ENCODE measurements at regions of chr11 and their contacts with region 1.

Region 1: GRCh38 chr11:62591448-62592145 is at the start of gene TUT1:
- DNase-seq: peak; percentile 99
- ATAC-seq: peak; percentile 89
- H3K4me3 ChIP-seq: peak within 1 kb of the TSS; percentile 85 to 97 (median 93)
- H3K4me3 Mint-ChIP-seq: peak within 1 kb of the TSS; percentile 91
- H3K27ac ChIP-seq: peak within 1 kb of the TSS; percentile 90
- H3K27ac Mint-ChIP-seq: peak within 1 kb of the TSS; percentile 96
- H3K4me1 ChIP-seq: peaks cover 23 to 34% of the 10 kb centered on the region in 2 donors
- H3K4me1 Mint-ChIP-seq: peaks cover 43% of the 10 kb centered on the region
- H3K27me3 ChIP-seq: no peaks in the 10 kb centered on the region
- H3K27me3 Mint-ChIP-seq: no peaks in the 10 kb centered on the region
- CTCF ChIP-seq: no peak
- total RNA-seq, gene TUT1: 33.8 and 47.7 TPM in 2 replicates

Region 2: DNA sequence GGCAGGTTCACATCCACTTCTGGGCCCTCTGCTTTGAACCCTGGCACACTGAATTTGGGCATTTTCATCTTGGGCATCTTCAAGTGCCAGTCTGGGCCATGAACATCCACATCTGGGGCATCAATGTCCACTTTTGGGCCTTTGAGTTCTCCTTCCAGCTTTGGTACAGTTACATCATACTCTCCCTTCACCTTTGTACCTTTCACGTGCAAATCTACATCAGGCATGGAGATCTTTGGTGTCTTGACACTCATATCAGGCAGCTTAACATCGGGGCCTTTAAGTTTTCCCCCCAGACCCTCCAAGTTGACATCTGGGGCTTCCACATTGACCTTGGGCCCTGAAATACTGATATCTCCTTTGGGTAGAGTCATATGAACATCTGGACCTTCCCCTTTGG is 59.5 kb before region 1 on chr11:
- CTCF ChIA-PET with region 1: no interaction called
- POLR2A ChIA-PET with region 1: no interaction called
- intact Hi-C with region 1: no loop called
- DNase-seq: no peak
- ATAC-seq: no peak
- H3K4me3 ChIP-seq: no peak overlapping the region
- H3K4me3 Mint-ChIP-seq: no peak overlapping the region
- H3K27ac ChIP-seq: no peak overlapping the region
- H3K27ac Mint-ChIP-seq: no peak overlapping the region
- H3K4me1 ChIP-seq: no peaks in the 10 kb centered on the region
- H3K4me1 Mint-ChIP-seq: peaks cover 9% of the 10 kb centered on the region
- H3K27me3 ChIP-seq: no peaks in the 10 kb centered on the region
- H3K27me3 Mint-ChIP-seq: no peaks in the 10 kb centered on the region
- CTCF ChIP-seq: no peak

Region 3: DNA sequence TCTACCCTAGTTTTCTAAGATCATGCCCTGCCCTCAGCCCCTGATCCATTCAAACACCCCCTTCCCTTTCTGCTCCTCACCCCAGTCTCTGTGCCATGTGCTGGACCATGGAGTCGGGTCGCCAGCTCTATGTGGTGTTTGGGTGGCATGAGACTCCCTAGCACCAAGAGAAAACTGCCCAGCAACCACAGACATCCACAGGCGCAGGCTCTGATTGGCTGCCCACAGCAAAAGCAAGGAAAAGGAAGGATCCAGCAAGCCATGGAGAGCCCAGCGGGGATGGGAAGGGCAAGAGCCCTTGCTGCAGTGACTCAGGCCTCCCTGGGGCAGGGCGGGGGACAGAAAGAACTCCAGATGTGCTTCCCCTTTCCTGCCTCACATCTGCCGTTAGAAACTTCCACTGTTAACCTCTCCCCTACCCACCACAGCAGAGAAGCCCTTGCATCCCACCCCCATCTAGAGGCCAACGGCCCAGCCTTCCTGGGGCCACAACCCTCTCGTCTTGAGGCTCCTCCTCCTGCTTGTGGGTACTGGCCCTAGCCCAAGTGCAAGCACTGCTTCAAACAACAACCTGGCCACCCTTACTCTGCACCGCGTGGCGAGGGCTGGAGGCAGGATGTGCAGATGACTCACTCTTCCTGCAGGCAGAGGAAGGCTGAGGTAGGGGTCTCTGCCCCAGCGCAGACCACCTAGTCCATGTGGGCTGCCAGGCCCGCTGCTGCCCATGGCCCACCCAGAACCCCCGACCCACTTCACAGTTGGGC is 35.3 kb before region 1 on chr11:
- CTCF ChIA-PET with region 1: interaction called, 12 read pairs
- POLR2A ChIA-PET with region 1: interaction called, 14 read pairs
- intact Hi-C with region 1: no loop called
- DNase-seq: peak; percentile 75
- ATAC-seq: peak; percentile 37
- H3K4me3 ChIP-seq: peak overlapping the region in 4 of 5 experiments; percentile 0 to 53 (median 26)
- H3K4me3 Mint-ChIP-seq: peak overlapping the region; percentile 80
- H3K27ac ChIP-seq: peak overlapping the region; percentile 98 to 99
- H3K27ac Mint-ChIP-seq: peak overlapping the region; percentile 96
- H3K4me1 ChIP-seq: peaks cover 65 to 84% of the 10 kb centered on the region in 2 donors
- H3K4me1 Mint-ChIP-seq: peaks cover 74% of the 10 kb centered on the region
- H3K27me3 ChIP-seq: no peaks in the 10 kb centered on the region
- H3K27me3 Mint-ChIP-seq: no peaks in the 10 kb centered on the region
- CTCF ChIP-seq: no peak

Region 4: GRCh38 chr11:62645956-62646824 is 54.6 kb after region 1 on chr11 and contains the start of gene GANAB:
- CTCF ChIA-PET with region 1: interaction called, 4 read pairs
- POLR2A ChIA-PET with region 1: interaction called, 7 read pairs
- intact Hi-C with region 1: loop called (anchors 1 kb)
- DNase-seq: peak; percentile 97
- ATAC-seq: peak; percentile 99
- H3K4me3 ChIP-seq: peak within 1 kb of the TSS; percentile 54 to 98 (median 90)
- H3K4me3 Mint-ChIP-seq: peak within 1 kb of the TSS; percentile 97
- H3K27ac ChIP-seq: peak within 1 kb of the TSS; percentile 75 to 89
- H3K27ac Mint-ChIP-seq: peak within 1 kb of the TSS; percentile 95
- H3K4me1 ChIP-seq: peaks cover 14 to 21% of the 10 kb centered on the region in 2 donors
- H3K4me1 Mint-ChIP-seq: peaks cover 26% of the 10 kb centered on the region
- H3K27me3 ChIP-seq: no peaks in the 10 kb centered on the region
- H3K27me3 Mint-ChIP-seq: no peaks in the 10 kb centered on the region
- CTCF ChIP-seq: no peak
- total RNA-seq, gene GANAB: 190 and 204 TPM in 2 replicates

Region 5: GRCh38 chr11:62694455-62695167 is 103.0 kb after region 1 on chr11:
- CTCF ChIA-PET with region 1: interaction called, 41 read pairs
- POLR2A ChIA-PET with region 1: interaction called, 4 read pairs
- intact Hi-C with region 1: no loop called
- DNase-seq: peak; percentile 85
- ATAC-seq: peak; percentile 71
- H3K4me3 ChIP-seq: no peak overlapping the region
- H3K4me3 Mint-ChIP-seq: no peak overlapping the region
- H3K27ac ChIP-seq: no peak overlapping the region
- H3K27ac Mint-ChIP-seq: no peak overlapping the region
- H3K4me1 ChIP-seq: peaks cover 0 to 6% of the 10 kb centered on the region in 2 donors
- H3K4me1 Mint-ChIP-seq: peaks cover 5% of the 10 kb centered on the region
- H3K27me3 ChIP-seq: no peaks in the 10 kb centered on the region
- H3K27me3 Mint-ChIP-seq: no peaks in the 10 kb centered on the region
- CTCF ChIP-seq: peak; percentile 87

Region 6: GRCh38 chr11:62771144-62772021 is 179.8 kb after region 1 on chr11 and contains the start of gene TAF6L:
- CTCF ChIA-PET with region 1: interaction called, 3 read pairs
- POLR2A ChIA-PET with region 1: no interaction called
- intact Hi-C with region 1: loop called (anchors 5 kb)
- DNase-seq: peak; percentile 88
- ATAC-seq: peak; percentile 90
- H3K4me3 ChIP-seq: peak within 1 kb of the TSS; percentile 58 to 97 (median 68)
- H3K4me3 Mint-ChIP-seq: peak within 1 kb of the TSS; percentile 95
- H3K27ac ChIP-seq: peak within 1 kb of the TSS; percentile 63 to 84
- H3K27ac Mint-ChIP-seq: peak within 1 kb of the TSS; percentile 96
- H3K4me1 ChIP-seq: peaks cover 15 to 23% of the 10 kb centered on the region in 2 donors
- H3K4me1 Mint-ChIP-seq: peaks cover 26% of the 10 kb centered on the region
- H3K27me3 ChIP-seq: no peaks in the 10 kb centered on the region
- H3K27me3 Mint-ChIP-seq: no peaks in the 10 kb centered on the region
- CTCF ChIP-seq: no peak
- total RNA-seq, gene TAF6L: 43.2 and 48.2 TPM in 2 replicates

Region 7: DNA sequence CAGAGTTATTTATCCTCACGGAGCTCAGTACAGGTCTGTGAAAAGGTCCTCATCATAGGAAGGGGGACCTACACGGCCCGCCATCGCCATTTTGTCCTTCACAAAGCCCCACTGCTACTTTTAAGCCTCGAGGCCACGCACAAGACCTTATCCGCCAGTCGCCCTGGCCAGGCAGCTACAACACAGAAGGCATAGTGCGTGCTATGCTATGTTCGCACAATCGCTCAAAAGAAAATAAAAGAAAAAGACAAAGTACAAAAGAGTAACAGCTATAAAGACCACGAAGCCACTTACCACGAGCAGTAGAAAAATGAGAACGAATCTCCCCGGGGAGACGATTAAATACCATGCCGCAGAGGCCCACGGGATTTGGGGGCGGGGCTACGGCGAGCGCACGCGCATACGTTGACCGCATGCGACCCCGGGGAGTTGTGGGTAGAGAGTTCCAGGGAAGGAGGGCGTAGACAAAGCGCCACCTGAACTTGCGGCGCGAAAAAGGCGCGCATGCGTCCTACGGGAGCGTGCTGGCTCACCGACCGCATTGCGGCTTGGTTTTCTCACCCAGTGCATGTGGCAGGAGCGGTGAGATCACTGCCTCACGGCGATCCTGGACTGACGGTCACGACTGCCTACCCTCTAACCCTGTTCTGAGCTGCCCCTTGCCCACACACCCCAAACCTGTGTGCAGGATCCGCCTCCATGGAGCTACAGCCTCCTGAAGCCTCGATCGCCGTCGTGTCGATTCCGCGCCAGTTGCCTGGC is 264.2 kb after region 1 on chr11:
- CTCF ChIA-PET with region 1: interaction called, 3 read pairs
- POLR2A ChIA-PET with region 1: interaction called, 11 read pairs
- intact Hi-C with region 1: loop called (anchors 5 kb)
- DNase-seq: peak; percentile 99
- ATAC-seq: peak; percentile 92
- H3K4me3 ChIP-seq: peak overlapping the region; percentile 68 to 100 (median 99)
- H3K4me3 Mint-ChIP-seq: peak overlapping the region; percentile 99
- H3K27ac ChIP-seq: peak overlapping the region; percentile 65 to 84
- H3K27ac Mint-ChIP-seq: peak overlapping the region; percentile 98
- H3K4me1 ChIP-seq: peaks cover 39 to 58% of the 10 kb centered on the region in 2 donors
- H3K4me1 Mint-ChIP-seq: peaks cover 60% of the 10 kb centered on the region
- H3K27me3 ChIP-seq: no peaks in the 10 kb centered on the region
- H3K27me3 Mint-ChIP-seq: no peaks in the 10 kb centered on the region
- CTCF ChIP-seq: no peak

Measured in B cell (primary cell).